ENCODE measurements at regions of chr19 and their contacts with region 1.

Region 1: GRCh38 chr19:8585894-8586750 is 8.9 kb upstream of the MYO1F start:
- DNase-seq: peak; percentile 64 to 99
- H3K4me3 ChIP-seq: no peak overlapping the region
- H3K27ac ChIP-seq: no peak overlapping the region
- H3K4me1 ChIP-seq: no peaks in the 10 kb centered on the region; a peak in 1 of 7 replicates
- H3K27me3 ChIP-seq: peaks cover 0 to 3% (median 1%) of the 10 kb centered on the region in 4 experiments; a peak in 3 of 7 replicates
- CTCF ChIP-seq: peak; percentile 89 to 98 (median 93)
- EP300 ChIP-seq: no peak
- POLR2A ChIP-seq: no peak
- RAD21 ChIP-seq: peak; percentile 73 to 85

Region 2: GRCh38 chr19:8513687-8514504 is 72.2 kb before region 1 on chr19 and contains the start of gene ZNF414:
- CTCF ChIA-PET with region 1: interaction called, 14 read pairs
- POLR2A ChIA-PET with region 1: interaction called, 5 read pairs
- DNase-seq: peak; percentile 96 to 99
- H3K4me3 ChIP-seq: peak within 1 kb of the TSS; percentile 61 to 86 (median 76)
- H3K27ac ChIP-seq: peak within 1 kb of the TSS; percentile 89; the same call in 1 of the 2 replicates
- H3K4me1 ChIP-seq: peaks cover 0 to 14% (median 8%) of the 10 kb centered on the region in 4 experiments; a peak in 6 of 7 replicates
- H3K27me3 ChIP-seq: no peaks in the 10 kb centered on the region
- CTCF ChIP-seq: no peak
- EP300 ChIP-seq: no peak
- POLR2A ChIP-seq: peak; percentile 93 to 96
- RAD21 ChIP-seq: no peak
- total RNA-seq, gene ZNF414: 23.6 and 26.8 TPM in 2 replicates

Region 3: DNA sequence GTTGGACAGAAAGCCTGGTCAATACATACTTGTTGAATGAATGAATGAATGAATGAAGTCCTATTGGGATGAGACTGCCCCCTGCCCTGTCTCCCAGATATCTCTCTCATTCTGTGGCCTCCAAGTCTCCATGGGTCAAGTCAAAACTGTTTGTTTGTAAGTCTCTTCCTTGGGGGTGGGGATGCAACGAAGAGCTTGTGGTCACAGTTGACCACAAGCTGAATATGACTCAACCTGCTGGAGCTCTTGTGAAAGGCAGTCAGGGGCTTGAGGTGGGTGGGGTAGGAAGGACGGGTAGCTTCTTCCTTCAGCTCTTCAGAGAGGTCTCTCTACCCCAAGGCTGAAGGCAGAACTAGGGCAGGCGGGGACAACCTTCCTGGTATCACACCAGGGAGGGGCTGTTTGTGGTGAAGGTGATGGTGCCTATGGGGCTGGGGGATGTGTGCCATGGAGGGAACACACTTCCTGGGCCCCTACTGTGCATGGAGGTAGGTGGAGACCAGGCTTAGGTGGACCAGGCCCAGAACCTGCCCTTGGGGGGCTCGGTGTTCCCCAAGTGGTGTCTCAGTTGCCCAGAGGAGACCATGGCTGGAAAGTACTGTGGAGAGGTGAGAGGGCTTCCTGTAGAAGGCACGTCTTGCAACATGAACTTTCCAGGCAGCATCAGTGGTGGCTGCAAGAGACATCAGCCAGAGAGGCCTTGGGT is 16.9 kb before region 1 on chr19:
- CTCF ChIA-PET with region 1: interaction called, 83 read pairs
- POLR2A ChIA-PET with region 1: interaction called, 3 read pairs
- DNase-seq: no peak
- H3K4me3 ChIP-seq: no peak overlapping the region
- H3K27ac ChIP-seq: no peak overlapping the region
- H3K4me1 ChIP-seq: no peaks in the 10 kb centered on the region; a peak in 1 of 7 replicates
- H3K27me3 ChIP-seq: no peaks in the 10 kb centered on the region
- CTCF ChIP-seq: no peak
- EP300 ChIP-seq: no peak
- POLR2A ChIP-seq: no peak
- RAD21 ChIP-seq: no peak

Region 4: GRCh38 chr19:8575467-8575997 is 10.6 kb before region 1 on chr19:
- CTCF ChIA-PET with region 1: interaction called, 83 read pairs
- POLR2A ChIA-PET with region 1: interaction called, 13 read pairs
- DNase-seq: no peak
- H3K4me3 ChIP-seq: no peak overlapping the region
- H3K27ac ChIP-seq: no peak overlapping the region
- H3K4me1 ChIP-seq: peaks cover 0 to 12% (median 2%) of the 10 kb centered on the region in 4 experiments; a peak in 3 of 7 replicates
- H3K27me3 ChIP-seq: no peaks in the 10 kb centered on the region
- CTCF ChIP-seq: no peak
- EP300 ChIP-seq: no peak
- POLR2A ChIP-seq: no peak
- RAD21 ChIP-seq: no peak

Region 5: GRCh38 chr19:8609279-8610040 is 23.3 kb after region 1 on chr19:
- CTCF ChIA-PET with region 1: interaction called, 16 read pairs
- POLR2A ChIA-PET with region 1: interaction called, 5 read pairs
- DNase-seq: peak; percentile 36 to 82
- H3K4me3 ChIP-seq: peak overlapping the region; percentile 70 to 93 (median 88)
- H3K27ac ChIP-seq: peak overlapping the region; percentile 79
- H3K4me1 ChIP-seq: peaks cover 10 to 29% (median 19%) of the 10 kb centered on the region in 4 experiments
- H3K27me3 ChIP-seq: no peaks in the 10 kb centered on the region
- CTCF ChIP-seq: peak in 1 of 3 experiments; percentile 11; a peak in 2 of 4 replicates
- EP300 ChIP-seq: peak in 1 of 2 experiments; percentile 52; a peak in 1 of 3 replicates
- POLR2A ChIP-seq: peak in 1 of 2 experiments; percentile 71; a peak in 1 of 3 replicates
- RAD21 ChIP-seq: peak in 1 of 2 experiments; percentile 0; a peak in 1 of 4 replicates

Region 6: GRCh38 chr19:8721334-8721733 is 135.2 kb after region 1 on chr19 and contains the start of gene OR2Z1:
- CTCF ChIA-PET with region 1: no interaction called
- POLR2A ChIA-PET with region 1: no interaction called
- DNase-seq: no peak
- H3K4me3 ChIP-seq: no peak within 1 kb of the TSS
- H3K27ac ChIP-seq: no peak within 1 kb of the TSS
- H3K4me1 ChIP-seq: no peaks in the 10 kb centered on the region
- H3K27me3 ChIP-seq: no peaks in the 10 kb centered on the region
- CTCF ChIP-seq: no peak
- EP300 ChIP-seq: no peak
- POLR2A ChIP-seq: no peak
- RAD21 ChIP-seq: no peak
- total RNA-seq, gene OR2Z1: not detected in 2 replicates

Region 7: GRCh38 chr19:8826383-8826782 is 240.3 kb after region 1 on chr19:
- CTCF ChIA-PET with region 1: no interaction called
- POLR2A ChIA-PET with region 1: no interaction called
- DNase-seq: no peak
- H3K4me3 ChIP-seq: no peak overlapping the region
- H3K27ac ChIP-seq: no peak overlapping the region
- H3K4me1 ChIP-seq: no peaks in the 10 kb centered on the region
- H3K27me3 ChIP-seq: no peaks in the 10 kb centered on the region
- CTCF ChIP-seq: peak in 1 of 3 experiments; percentile 3; a peak in 1 of 4 replicates
- EP300 ChIP-seq: no peak
- POLR2A ChIP-seq: no peak
- RAD21 ChIP-seq: peak in 1 of 2 experiments; percentile 13; a peak in 1 of 4 replicates